ENCODE measurements at regions of chrX and their contacts with region 1.

Region 1: DNA sequence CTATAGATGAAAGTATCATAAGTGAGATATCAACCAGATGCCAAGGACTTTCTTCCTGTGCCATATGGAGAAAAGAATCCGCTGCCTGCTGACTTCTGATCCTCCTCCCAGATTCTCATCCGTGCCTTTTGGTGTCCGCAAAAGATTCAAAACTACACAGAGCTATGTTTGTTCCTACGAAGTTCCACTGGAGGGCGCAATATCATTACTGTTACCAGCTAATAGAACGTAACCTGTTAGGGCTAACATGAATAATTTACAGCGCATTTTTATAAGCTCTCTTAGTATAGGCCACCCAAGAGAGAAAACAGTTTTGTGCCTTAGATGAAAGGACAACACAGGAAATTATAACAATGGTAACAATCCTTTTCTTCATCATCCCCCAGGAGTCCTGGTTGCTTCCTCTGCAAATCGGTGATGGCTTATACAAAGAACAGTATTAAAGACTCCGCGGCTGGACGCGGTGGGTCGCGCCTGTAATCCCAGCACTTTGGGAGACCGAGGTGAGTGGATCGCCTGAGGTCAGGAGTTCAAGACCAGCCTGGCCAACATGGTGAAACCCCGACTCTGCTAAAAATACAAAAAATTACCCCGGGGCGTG is 22.8 kb upstream of the CENPVL3 start:
- DNase-seq: peak; percentile 39
- H3K4me3 Mint-ChIP-seq: no peak overlapping the region
- H3K27ac Mint-ChIP-seq: no peak overlapping the region
- H3K4me1 Mint-ChIP-seq: no peaks in the 10 kb centered on the region
- H3K27me3 Mint-ChIP-seq: peaks cover 59% of the 10 kb centered on the region
- CTCF ChIP-seq: peak; percentile 52

Region 2: GRCh38 chrX:51743179-51743957 is 101.8 kb after region 1 on chrX and contains the start of gene GSPT2:
- CTCF ChIA-PET with region 1: no interaction called
- POLR2A ChIA-PET with region 1: no interaction called
- intact Hi-C with region 1: no loop called
- DNase-seq: no peak
- H3K4me3 Mint-ChIP-seq: no peak within 1 kb of the TSS
- H3K27ac Mint-ChIP-seq: no peak within 1 kb of the TSS
- H3K4me1 Mint-ChIP-seq: no peaks in the 10 kb centered on the region
- H3K27me3 Mint-ChIP-seq: peaks cover 91% of the 10 kb centered on the region
- CTCF ChIP-seq: no peak
- total RNA-seq, gene GSPT2: not detected in 2 replicates

Region 3: DNA sequence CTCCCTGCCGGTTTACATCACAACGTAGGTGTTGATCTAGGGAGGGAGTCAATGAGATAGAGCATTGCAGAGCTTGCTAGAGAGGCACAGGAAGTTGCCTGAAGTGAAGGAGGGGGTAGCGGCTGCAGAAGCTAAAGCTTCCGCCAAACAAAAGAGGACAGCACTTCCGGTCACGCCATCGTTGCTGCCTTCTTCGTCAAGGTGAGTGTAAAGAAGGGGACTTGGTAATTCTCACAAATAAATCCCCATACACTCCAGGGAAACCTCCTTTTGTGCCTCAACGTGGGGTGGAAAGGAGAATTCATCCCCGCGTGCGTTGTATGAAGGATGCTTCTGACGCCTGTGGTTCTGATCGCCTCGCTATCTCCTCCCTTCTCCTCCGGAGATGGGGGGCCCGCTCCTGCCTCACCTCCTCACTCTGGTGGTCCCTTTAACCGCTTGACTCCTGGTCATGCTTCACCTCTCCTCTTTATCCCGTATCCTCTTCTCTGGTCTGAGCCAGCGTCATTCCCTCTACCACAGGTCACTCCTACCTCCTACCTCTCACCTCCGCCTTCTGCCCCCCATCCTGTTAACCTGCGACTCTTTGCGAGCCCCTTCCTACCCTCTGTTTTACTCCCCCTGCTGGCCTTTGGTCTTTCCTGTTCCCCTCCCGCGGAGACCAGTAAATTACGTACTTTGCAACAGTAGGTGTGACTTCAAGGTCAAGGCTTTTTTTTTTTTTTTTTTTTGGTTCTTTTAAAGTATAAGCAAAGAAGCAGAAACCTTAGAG is 161.6 kb after region 1 on chrX:
- CTCF ChIA-PET with region 1: interaction called, 4 read pairs
- POLR2A ChIA-PET with region 1: interaction called, 3 read pairs
- intact Hi-C with region 1: loop called (anchors 2 kb)
- DNase-seq: peak; percentile 53
- H3K4me3 Mint-ChIP-seq: peak overlapping the region; percentile 83
- H3K27ac Mint-ChIP-seq: peak overlapping the region; percentile 91
- H3K4me1 Mint-ChIP-seq: peaks cover 6% of the 10 kb centered on the region
- H3K27me3 Mint-ChIP-seq: peaks cover 37% of the 10 kb centered on the region
- CTCF ChIP-seq: no peak

Region 4: DNA sequence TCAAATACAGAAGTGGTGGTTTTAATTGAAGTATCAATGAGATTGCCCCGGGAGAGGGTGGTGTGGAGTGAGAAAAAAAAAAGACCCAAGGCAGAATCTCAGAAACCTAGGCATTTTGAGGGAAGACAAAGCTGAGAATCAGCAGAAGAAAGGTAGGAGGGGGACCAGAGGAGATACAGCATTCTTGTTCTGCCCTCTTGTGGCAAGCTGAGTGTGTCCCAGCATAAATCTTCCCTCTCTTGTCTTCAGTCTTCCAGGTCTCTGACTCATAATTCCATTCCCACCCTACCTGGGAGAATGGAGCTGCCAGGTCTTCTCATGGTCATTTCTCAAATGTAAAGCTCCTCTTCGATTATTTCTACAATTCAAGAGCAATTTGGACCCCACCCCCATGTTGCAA is 219.2 kb after region 1 on chrX:
- CTCF ChIA-PET with region 1: interaction called, 21 read pairs
- POLR2A ChIA-PET with region 1: no interaction called
- intact Hi-C with region 1: loop called (anchors 1 kb)
- DNase-seq: peak; percentile 43
- H3K4me3 Mint-ChIP-seq: no peak overlapping the region
- H3K27ac Mint-ChIP-seq: no peak overlapping the region
- H3K4me1 Mint-ChIP-seq: no peaks in the 10 kb centered on the region
- H3K27me3 Mint-ChIP-seq: peaks cover 27% of the 10 kb centered on the region
- CTCF ChIP-seq: peak; percentile 30

Region 5: DNA sequence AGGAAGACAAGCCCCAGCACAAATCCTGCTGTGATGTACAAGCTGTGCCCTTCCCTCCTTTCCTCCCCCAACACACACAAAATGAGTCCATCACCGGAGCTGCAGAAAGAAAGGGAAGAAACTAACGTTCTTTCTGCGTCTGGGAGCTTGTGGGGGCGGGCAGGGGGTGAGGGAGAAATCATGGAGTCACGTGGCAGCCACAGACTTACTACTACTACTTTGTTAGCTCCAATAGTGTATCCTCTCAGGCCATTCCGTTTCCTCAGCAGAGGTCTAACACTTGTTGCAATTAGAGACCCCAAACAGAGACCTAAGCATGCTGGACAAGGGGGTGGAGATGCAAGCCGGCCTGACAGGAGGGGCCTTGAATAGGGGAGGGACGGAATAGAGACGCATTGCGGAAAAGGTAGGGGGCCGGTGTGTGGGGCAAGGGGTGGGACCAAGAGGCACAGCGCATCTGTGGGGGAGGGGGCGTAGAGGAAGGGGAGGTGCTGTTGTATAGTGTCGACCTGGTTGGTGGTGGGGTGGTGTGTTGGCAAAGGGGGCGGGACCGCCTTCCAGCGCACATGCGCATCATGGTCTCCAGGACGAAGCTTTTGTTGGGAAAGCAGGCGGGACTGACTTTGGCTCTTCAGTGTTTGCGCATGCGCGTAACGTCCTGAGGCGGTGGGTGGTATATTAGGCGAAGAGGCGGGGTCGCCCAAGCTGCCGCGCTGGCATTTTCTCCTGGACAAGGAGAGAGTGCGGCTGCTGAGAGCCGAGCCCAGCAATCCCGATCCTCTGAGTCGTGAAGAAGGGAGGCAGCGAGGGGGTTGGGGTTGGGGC is 251.6 kb after region 1 on chrX and contains the start of gene MAGED1:
- CTCF ChIA-PET with region 1: interaction called, 3 read pairs
- POLR2A ChIA-PET with region 1: no interaction called
- intact Hi-C with region 1: loop called (anchors 2 kb)
- DNase-seq: peak; percentile 87
- H3K4me3 Mint-ChIP-seq: peak within 1 kb of the TSS; percentile 82
- H3K27ac Mint-ChIP-seq: peak within 1 kb of the TSS; percentile 89
- H3K4me1 Mint-ChIP-seq: peaks cover 6% of the 10 kb centered on the region
- H3K27me3 Mint-ChIP-seq: peaks cover 15% of the 10 kb centered on the region
- CTCF ChIP-seq: no peak
- total RNA-seq, gene MAGED1: 46.7 and 48.6 TPM in 2 replicates

Region 6: GRCh38 chrX:52261463-52262194 is 620.1 kb after region 1 on chrX:
- CTCF ChIA-PET with region 1: interaction called, 3 read pairs
- POLR2A ChIA-PET with region 1: no interaction called
- intact Hi-C with region 1: loop called (anchors 2 kb)
- DNase-seq: peak; percentile 87
- H3K4me3 Mint-ChIP-seq: peak overlapping the region; percentile 97
- H3K27ac Mint-ChIP-seq: peak overlapping the region; percentile 99
- H3K4me1 Mint-ChIP-seq: peaks cover 13% of the 10 kb centered on the region
- H3K27me3 Mint-ChIP-seq: peaks cover 46% of the 10 kb centered on the region
- CTCF ChIP-seq: peak; percentile 98